ENCODE measurements at regions of chr1 and their contacts with region 1.

Region 1: DNA sequence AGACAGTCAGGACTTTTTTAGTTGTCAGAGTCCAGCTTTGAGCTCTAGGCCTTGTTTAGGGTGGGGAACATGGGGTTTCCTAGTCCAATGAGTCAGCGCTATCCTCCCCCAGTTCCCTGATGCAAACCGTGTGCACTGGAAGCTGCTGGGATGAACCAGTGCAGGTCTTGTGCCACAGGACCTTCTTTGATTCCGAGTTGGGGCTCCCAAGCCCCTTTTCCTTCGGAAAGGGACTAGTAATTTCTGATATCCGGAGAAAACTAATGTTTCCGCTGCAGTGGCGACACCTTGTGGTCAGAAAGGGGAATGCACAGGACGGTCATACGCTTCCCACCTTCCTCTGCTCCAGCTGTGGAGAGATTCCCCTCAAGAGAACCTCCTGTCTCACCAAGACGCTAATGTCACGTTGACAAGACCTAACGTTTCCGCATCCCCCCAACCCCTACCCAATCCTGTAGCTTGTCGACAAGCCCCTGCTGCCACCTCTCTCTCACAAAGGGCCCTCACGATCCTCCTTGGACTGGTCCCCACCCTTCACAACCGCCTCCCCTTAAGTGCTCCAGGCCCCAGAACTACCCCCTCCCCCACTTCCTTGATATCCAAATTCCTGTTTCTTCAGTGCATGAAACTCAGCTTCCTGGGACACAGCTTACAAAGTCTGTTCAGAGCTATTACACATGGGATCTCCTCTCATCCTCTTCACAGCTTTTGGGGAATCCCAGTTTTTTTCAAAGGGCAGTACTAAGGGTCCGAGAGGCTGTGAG is 30.9 kb downstream of the GPA33 start:
- DNase-seq: peak; percentile 64
- CTCF ChIP-seq: peak; percentile 91

Region 2: GRCh38 chr1:166627558-166627957 is 431.7 kb before region 1 on chr1:
- CTCF ChIA-PET with region 1: no interaction called
- POLR2A ChIA-PET with region 1: no interaction called
- DNase-seq: no peak
- CTCF ChIP-seq: no peak

Region 3: DNA sequence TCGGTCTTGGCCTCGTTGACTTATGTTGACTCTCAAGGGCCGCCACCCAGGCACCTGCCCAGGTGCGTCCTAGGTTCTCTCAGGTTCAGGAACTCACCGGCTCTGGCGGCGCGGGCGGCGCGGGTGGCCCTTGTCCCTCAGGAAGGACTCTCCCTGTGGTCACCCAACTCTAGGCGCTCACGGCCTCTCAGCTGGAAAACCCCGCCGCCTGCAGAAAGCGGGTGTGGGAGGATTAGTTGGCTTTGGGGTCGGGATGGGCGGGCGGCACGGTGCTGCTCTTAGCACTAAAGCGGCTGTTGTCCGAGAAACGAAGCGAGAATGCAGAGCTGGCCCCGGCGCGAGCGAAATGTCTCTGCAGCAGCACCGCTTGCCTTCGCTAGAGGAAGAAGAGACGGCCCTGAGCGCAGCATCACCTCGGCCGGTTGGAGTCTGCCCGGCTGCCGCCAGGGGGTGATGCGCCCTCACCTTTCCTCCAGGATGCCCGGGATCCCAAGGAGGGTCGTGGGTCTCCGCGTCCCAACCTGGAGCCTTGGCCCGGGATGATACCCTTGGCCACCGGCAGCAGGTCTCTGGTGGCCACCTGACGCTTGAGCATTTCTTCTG is 175.1 kb before region 1 on chr1:
- CTCF ChIA-PET with region 1: interaction called, 51 read pairs
- POLR2A ChIA-PET with region 1: no interaction called
- DNase-seq: peak; percentile 52
- CTCF ChIP-seq: peak; percentile 48

Region 4: GRCh38 chr1:166920561-166921475 is 138.4 kb before region 1 on chr1:
- CTCF ChIA-PET with region 1: interaction called, 659 read pairs
- POLR2A ChIA-PET with region 1: no interaction called
- DNase-seq: peak; percentile 38
- CTCF ChIP-seq: no peak

Region 5: GRCh38 chr1:167082511-167083027 is 23.3 kb after region 1 on chr1:
- CTCF ChIA-PET with region 1: interaction called, 13 read pairs
- POLR2A ChIA-PET with region 1: no interaction called
- DNase-seq: no peak
- CTCF ChIP-seq: no peak

Measured in GM10248 (cell line).